IMR-90 (cell line): ENCODE measurements at regions of chr3 and their contacts with region 1.

Region 1: GRCh38 chr3:16177962-16178627 is 3.6 kb downstream of the GALNT15 start:
- DNase-seq: peak; percentile 86
- ATAC-seq: peak; percentile 61
- H3K4me3 ChIP-seq: peak overlapping the region; percentile 76; the same call in 1 of the 2 replicates
- H3K27ac ChIP-seq: peak overlapping the region; percentile 80
- H3K4me1 ChIP-seq: peaks cover 49% of the 10 kb centered on the region
- H3K27me3 ChIP-seq: no peaks in the 10 kb centered on the region
- CTCF ChIP-seq: peak; percentile 98
- POLR2A ChIP-seq: peak; percentile 67
- RAD21 ChIP-seq: peak; percentile 99

Region 2: DNA sequence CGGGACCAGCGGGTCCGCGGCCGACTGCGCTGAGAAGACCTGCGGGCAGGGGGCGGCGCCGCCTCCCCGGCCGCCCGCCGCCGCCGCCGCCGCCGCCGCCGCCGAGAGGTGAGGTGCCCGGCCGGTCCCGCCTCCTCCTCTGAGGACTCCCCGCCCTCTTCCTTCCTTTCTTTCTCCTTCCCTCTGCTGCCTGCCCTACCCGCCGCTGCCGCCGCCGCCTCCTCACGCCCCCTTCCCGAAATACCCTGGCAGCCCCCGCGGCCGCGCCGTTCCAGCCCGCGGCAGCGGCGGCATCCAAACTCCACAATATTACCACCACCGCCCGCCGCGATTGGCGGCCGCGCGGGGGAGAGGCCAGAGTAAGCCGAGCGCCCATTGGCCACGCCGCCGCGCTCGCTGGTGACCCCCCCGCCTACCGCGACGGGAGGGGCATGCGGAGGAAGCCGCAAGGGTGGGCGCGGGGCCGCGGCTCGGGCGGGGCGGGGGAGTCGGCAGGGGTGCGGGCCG is 318.5 kb before region 1 on chr3:
- CTCF ChIA-PET with region 1: no interaction called
- POLR2A ChIA-PET with region 1: no interaction called
- dilution Hi-C with region 1: no loop called
- in situ Hi-C with region 1: no loop called
- intact Hi-C with region 1: loop called (anchors 1 kb)
- DNase-seq: peak; percentile 74
- ATAC-seq: peak; percentile 96
- H3K4me3 ChIP-seq: peak overlapping the region; percentile 88
- H3K27ac ChIP-seq: peak overlapping the region; percentile 50
- H3K4me1 ChIP-seq: no peaks in the 10 kb centered on the region
- H3K27me3 ChIP-seq: no peaks in the 10 kb centered on the region
- CTCF ChIP-seq: no peak
- POLR2A ChIP-seq: no peak
- RAD21 ChIP-seq: no peak

Region 3: GRCh38 chr3:16048435-16049318 is 129.4 kb before region 1 on chr3:
- CTCF ChIA-PET with region 1: interaction called, 21 read pairs
- POLR2A ChIA-PET with region 1: no interaction called
- dilution Hi-C with region 1: no loop called
- in situ Hi-C with region 1: no loop called
- intact Hi-C with region 1: loop called (anchors 1 kb)
- DNase-seq: peak; percentile 81
- ATAC-seq: peak; percentile 94
- H3K4me3 ChIP-seq: no peak overlapping the region; the same call in 1 of the 2 replicates
- H3K27ac ChIP-seq: peak overlapping the region; percentile 28; the same call in 1 of the 2 replicates
- H3K4me1 ChIP-seq: peaks cover 12% of the 10 kb centered on the region
- H3K27me3 ChIP-seq: no peaks in the 10 kb centered on the region
- CTCF ChIP-seq: peak; percentile 93
- POLR2A ChIP-seq: peak; percentile 67
- RAD21 ChIP-seq: peak; percentile 100

Region 4: DNA sequence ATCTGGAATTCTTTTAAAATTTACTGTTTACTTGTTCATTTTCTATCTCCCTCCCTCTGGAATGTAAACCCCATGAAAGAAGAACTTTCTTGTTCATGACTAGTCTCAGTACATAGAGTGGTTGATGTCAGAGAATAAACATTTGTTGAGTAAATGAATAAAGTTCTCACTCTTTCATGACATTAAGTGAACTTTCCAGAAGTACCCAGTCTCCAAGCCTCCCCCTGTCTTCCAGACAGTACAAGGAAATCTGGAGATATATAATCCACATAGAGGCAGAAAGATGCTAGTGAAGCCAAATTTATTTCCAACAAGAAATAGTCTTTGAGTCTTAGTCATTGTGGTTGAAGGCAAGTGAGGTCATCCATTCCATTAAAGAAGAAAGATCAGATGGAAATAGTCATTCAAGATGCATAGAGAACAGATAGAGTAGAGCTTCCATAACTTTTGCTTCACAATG is 75.2 kb before region 1 on chr3:
- CTCF ChIA-PET with region 1: interaction called, 6 read pairs
- POLR2A ChIA-PET with region 1: no interaction called
- dilution Hi-C with region 1: no loop called
- in situ Hi-C with region 1: no loop called
- intact Hi-C with region 1: loop called (anchors 1 kb)
- DNase-seq: peak; percentile 95
- ATAC-seq: peak; percentile 86
- H3K4me3 ChIP-seq: no peak overlapping the region
- H3K27ac ChIP-seq: peak overlapping the region; percentile 96
- H3K4me1 ChIP-seq: peaks cover 14% of the 10 kb centered on the region
- H3K27me3 ChIP-seq: no peaks in the 10 kb centered on the region
- CTCF ChIP-seq: peak; percentile 30
- POLR2A ChIP-seq: no peak; the same call in 1 of the 2 replicates
- RAD21 ChIP-seq: peak; percentile 38; the same call in 1 of the 2 replicates

Region 5: DNA sequence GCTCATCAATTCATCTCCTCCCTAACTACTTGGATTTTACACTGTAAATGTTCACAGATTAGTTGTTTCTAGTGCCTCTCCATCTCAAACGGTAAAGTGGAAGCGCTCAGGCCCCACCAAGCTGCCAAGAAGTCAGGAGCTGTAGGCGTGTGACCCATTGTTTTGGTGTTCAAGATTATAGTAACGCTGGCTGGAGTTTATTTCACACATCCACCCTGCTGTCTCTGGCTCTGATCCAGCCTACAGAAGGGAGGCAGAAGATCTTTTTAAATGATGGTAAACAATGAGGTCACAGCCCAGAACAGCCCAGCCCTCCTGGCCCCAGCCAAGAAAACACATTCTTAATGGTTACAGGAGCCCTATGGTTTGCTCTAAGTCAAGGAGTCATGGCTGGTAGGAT is 29.3 kb before region 1 on chr3:
- CTCF ChIA-PET with region 1: no interaction called
- POLR2A ChIA-PET with region 1: no interaction called
- dilution Hi-C with region 1: no loop called
- in situ Hi-C with region 1: no loop called
- intact Hi-C with region 1: loop called (anchors 1 kb)
- DNase-seq: peak; percentile 94
- ATAC-seq: peak; percentile 92
- H3K4me3 ChIP-seq: no peak overlapping the region
- H3K27ac ChIP-seq: peak overlapping the region; percentile 63; the same call in 1 of the 2 replicates
- H3K4me1 ChIP-seq: peaks cover 12% of the 10 kb centered on the region
- H3K27me3 ChIP-seq: no peaks in the 10 kb centered on the region
- CTCF ChIP-seq: no peak
- POLR2A ChIP-seq: no peak
- RAD21 ChIP-seq: no peak